ENCODE measurements at regions of chr3 and their contacts with region 1.

Region 1: GRCh38 chr3:42880601-42881451 is 5.1 kb upstream of the CYP8B1 start:
- DNase-seq: peak; percentile 65 to 95 (median 86)
- ATAC-seq: peak; percentile 99
- H3K4me3 ChIP-seq: peak overlapping the region; percentile 75 to 77
- H3K4me3 Mint-ChIP-seq: peak overlapping the region; percentile 84
- H3K27ac ChIP-seq: peak overlapping the region; percentile 37 to 59
- H3K27ac Mint-ChIP-seq: peak overlapping the region; percentile 86
- H3K4me1 ChIP-seq: peaks cover 15% of the 10 kb centered on the region
- H3K4me1 Mint-ChIP-seq: peaks cover 11% of the 10 kb centered on the region
- H3K27me3 ChIP-seq: no peaks in the 10 kb centered on the region
- H3K27me3 Mint-ChIP-seq: no peaks in the 10 kb centered on the region
- CTCF ChIP-seq: peak; percentile 86

Region 2: DNA sequence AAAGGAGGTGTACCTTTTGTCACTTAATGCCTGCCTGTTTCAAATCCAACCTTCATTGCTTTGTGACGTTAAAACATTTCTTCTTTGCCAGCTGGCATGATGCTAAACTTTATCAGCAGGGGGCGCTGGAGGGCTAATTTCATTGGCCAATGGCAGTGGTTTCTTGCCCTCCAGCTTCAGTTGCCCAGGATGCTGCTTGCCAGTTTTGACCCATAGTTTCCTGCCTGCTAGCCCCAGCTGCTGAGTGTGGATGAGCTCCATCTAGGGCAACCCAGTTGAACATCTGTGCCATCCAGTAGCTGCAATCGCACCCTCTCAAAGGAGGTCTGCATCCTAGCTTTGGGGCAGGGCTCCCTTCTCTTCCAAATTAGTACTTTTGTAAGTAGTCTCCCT is 49.5 kb before region 1 on chr3:
- CTCF ChIA-PET with region 1: interaction called, 14 read pairs
- POLR2A ChIA-PET with region 1: no interaction called
- intact Hi-C with region 1: loop called (anchors 1 kb)
- DNase-seq: peak; percentile 43 to 80 (median 76)
- ATAC-seq: peak; percentile 69
- H3K4me3 ChIP-seq: no peak overlapping the region
- H3K4me3 Mint-ChIP-seq: no peak overlapping the region
- H3K27ac ChIP-seq: no peak overlapping the region
- H3K27ac Mint-ChIP-seq: no peak overlapping the region
- H3K4me1 ChIP-seq: peaks cover 4% of the 10 kb centered on the region
- H3K4me1 Mint-ChIP-seq: peaks cover 2% of the 10 kb centered on the region
- H3K27me3 ChIP-seq: no peaks in the 10 kb centered on the region
- H3K27me3 Mint-ChIP-seq: peaks cover 23% of the 10 kb centered on the region
- CTCF ChIP-seq: peak; percentile 76

Region 3: DNA sequence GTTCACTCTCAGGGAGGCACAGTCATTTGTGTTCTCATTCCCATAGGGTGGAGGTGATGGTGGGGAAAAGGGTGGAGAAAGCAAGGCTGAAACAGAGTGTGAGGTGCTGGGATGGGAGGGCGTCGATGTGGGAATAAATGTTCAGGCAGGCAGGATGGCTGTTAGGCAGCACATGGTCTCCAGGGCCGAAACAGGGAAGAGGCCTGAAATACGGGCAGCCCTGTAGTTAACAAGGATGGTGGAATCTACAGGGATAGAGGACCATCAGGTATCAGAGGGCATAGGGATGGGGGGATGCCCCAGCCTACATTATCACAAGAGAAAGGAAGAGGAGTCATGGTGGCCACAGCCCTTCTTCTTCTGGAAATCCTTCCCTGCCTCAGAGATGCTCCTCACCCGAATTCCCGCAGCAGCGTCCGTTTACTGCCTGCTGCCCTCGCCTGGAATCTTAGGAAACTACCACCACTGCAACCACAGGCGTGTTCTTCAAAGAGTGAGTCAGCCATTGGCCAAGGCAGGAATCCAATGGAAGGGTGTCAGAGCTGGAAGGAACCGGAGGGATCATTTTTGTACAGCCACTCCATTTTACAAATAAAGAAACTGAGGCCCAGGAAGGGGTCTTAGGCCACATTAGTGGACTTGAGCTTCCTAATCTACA is 274.8 kb after region 1 on chr3:
- CTCF ChIA-PET with region 1: no interaction called
- POLR2A ChIA-PET with region 1: no interaction called
- intact Hi-C with region 1: no loop called
- DNase-seq: no peak
- ATAC-seq: no peak
- H3K4me3 ChIP-seq: no peak overlapping the region
- H3K4me3 Mint-ChIP-seq: peak overlapping the region; percentile 0
- H3K27ac ChIP-seq: no peak overlapping the region
- H3K27ac Mint-ChIP-seq: peak overlapping the region; percentile 83
- H3K4me1 ChIP-seq: peaks cover 15% of the 10 kb centered on the region
- H3K4me1 Mint-ChIP-seq: peaks cover 36% of the 10 kb centered on the region
- H3K27me3 ChIP-seq: no peaks in the 10 kb centered on the region
- H3K27me3 Mint-ChIP-seq: peaks cover 2% of the 10 kb centered on the region
- CTCF ChIP-seq: no peak